PC-9 (cell line): ENCODE measurements at regions of chr16 and their contacts with region 1.

Region 1: DNA sequence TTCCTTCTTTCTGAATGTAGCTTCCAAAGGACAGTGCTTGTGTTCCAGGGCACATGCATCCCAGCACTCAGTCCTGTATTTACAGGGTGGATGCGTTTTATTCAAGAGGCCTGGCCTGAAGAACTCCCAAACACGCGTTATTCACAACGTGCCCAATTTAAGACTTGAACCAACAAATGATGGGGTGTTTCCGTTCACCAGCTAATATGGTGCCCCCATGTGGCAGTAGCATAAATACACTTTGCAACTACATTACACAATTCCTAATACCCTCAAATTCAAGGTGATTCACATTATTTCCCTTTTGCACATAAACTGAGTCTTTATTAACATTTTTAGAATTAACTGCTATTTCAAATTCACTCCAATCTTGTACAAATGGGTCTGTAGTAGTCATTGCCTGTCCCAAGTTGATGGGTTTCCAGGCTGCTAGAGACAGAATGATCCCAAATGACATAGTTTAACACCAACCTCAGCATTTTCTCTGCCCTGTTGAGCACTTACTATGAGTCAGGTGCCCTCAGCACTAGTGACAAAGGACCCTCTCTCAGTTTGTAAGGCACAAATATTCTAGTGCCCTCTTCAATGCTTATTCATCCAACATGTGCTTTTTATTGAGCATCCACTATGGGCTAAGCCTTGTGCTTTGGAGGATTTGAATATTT is 26.9 kb downstream of the HSD17B2 start:
- DNase-seq: no peak
- H3K4me3 ChIP-seq: no peak overlapping the region
- H3K27ac ChIP-seq: no peak overlapping the region
- H3K4me1 ChIP-seq: no peaks in the 10 kb centered on the region
- H3K27me3 ChIP-seq: peaks cover 44% of the 10 kb centered on the region
- CTCF ChIP-seq: peak; percentile 72

Region 2: GRCh38 chr16:81885976-81886586 is 175.9 kb before region 1 on chr16:
- CTCF ChIA-PET with region 1: no interaction called
- POLR2A ChIA-PET with region 1: no interaction called
- intact Hi-C with region 1: loop called (anchors 1 kb)
- DNase-seq: peak in 1 of 2 experiments; percentile 37
- H3K4me3 ChIP-seq: no peak overlapping the region
- H3K27ac ChIP-seq: no peak overlapping the region
- H3K4me1 ChIP-seq: 0 out of 2 replicates have a peak, but pooled peaks cover 12% of the 10 kb centered on the region
- H3K27me3 ChIP-seq: no peaks in the 10 kb centered on the region
- CTCF ChIP-seq: peak; percentile 80

Region 3: GRCh38 chr16:81940781-81941560 is 121.0 kb before region 1 on chr16:
- CTCF ChIA-PET with region 1: no interaction called
- POLR2A ChIA-PET with region 1: no interaction called
- intact Hi-C with region 1: loop called (anchors 1 kb)
- DNase-seq: peak in 1 of 2 experiments; percentile 64
- H3K4me3 ChIP-seq: no peak overlapping the region
- H3K27ac ChIP-seq: no peak overlapping the region
- H3K4me1 ChIP-seq: no peaks in the 10 kb centered on the region
- H3K27me3 ChIP-seq: no peaks in the 10 kb centered on the region
- CTCF ChIP-seq: peak; percentile 74

Region 4: DNA sequence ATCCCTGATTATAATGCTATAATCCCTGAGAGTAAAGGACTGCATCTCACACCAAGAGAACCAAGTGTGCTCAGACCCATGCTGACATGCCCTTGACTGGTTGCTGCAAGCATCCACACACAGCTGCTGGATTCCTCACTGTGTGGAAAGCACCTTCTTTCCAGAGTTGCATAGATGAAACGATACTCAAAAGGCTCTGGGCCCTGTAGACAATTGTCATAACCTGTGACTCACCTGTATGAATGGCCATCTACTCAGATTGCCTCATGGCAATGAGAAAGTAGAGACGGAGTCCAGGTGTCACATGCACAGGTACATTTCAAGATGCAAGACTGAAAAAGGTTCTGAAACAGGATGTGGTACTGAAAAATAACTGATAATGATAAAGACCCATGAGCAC is 50.0 kb after region 1 on chr16:
- CTCF ChIA-PET with region 1: no interaction called
- POLR2A ChIA-PET with region 1: no interaction called
- intact Hi-C with region 1: loop called (anchors 5 kb)
- DNase-seq: peak; percentile 11 to 65
- H3K4me3 ChIP-seq: no peak overlapping the region
- H3K27ac ChIP-seq: no peak overlapping the region
- H3K4me1 ChIP-seq: no peaks in the 10 kb centered on the region
- H3K27me3 ChIP-seq: no peaks in the 10 kb centered on the region
- CTCF ChIP-seq: no peak